Prostate gland (tissue), 2 donors: ENCODE measurements at regions of chr1 and their contacts with region 1.

Region 1: GRCh38 chr1:166272155-166272554 is 105.4 kb upstream of the FAM78B start:
- DNase-seq: no peak
- H3K4me3 ChIP-seq: no peak overlapping the region
- H3K27ac ChIP-seq: no peak overlapping the region
- H3K4me1 ChIP-seq: no peaks in the 10 kb centered on the region
- H3K27me3 ChIP-seq: no peaks in the 10 kb centered on the region
- CTCF ChIP-seq: no peak
- POLR2A ChIP-seq: no peak

Region 2: DNA sequence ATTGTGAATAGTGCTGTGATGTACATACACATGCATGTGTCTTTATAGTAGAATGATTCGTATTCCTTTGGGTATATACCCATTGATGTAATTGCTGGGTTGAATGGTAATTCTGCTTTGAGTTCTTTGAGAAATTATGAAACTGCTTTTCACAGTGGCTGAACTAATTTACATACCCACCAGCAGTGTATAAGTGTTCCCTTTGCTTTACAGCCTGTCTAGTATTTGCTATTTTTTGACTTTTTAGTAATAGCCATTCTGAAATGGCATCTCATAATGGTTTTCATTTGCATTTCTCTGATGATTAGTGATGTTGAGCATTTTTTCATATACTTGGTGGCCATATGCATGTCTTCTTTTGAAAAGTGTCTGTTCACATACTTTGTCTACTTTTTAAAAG is 50.8 kb before region 1 on chr1:
- intact Hi-C with region 1: loop called (anchors 2 kb)
- DNase-seq: no peak
- H3K4me3 ChIP-seq: no peak overlapping the region
- H3K27ac ChIP-seq: no peak overlapping the region
- H3K4me1 ChIP-seq: no peaks in the 10 kb centered on the region
- H3K27me3 ChIP-seq: no peaks in the 10 kb centered on the region
- CTCF ChIP-seq: no peak
- POLR2A ChIP-seq: no peak